Activated CD8-positive, alpha-beta memory T cell treated with anti-CD3 and anti-CD28 coated beads, Interleukin-2, amount 10 ng/mL, durations not matched to agents 7 days and 5 days (primary cell): ENCODE measurements at regions of chr10 and their contacts with region 1.

Region 1: GRCh38 chr10:69232252-69232651 is 12.1 kb downstream of the HKDC1 start:
- DNase-seq: no peak
- ATAC-seq: no peak
- H3K4me3 Mint-ChIP-seq: no peak overlapping the region
- H3K27ac Mint-ChIP-seq: peak overlapping the region; percentile 39
- H3K4me1 Mint-ChIP-seq: peaks cover 65% of the 10 kb centered on the region
- H3K27me3 Mint-ChIP-seq: no peaks in the 10 kb centered on the region

Region 2: GRCh38 chr10:69217119-69217754 is 15.0 kb before region 1 on chr10:
- CTCF ChIA-PET with region 1: interaction called, 10 read pairs
- DNase-seq: no peak
- ATAC-seq: no peak
- H3K4me3 Mint-ChIP-seq: no peak overlapping the region
- H3K27ac Mint-ChIP-seq: no peak overlapping the region
- H3K4me1 Mint-ChIP-seq: peaks cover 54% of the 10 kb centered on the region
- H3K27me3 Mint-ChIP-seq: no peaks in the 10 kb centered on the region

Region 3: GRCh38 chr10:69352569-69353264 is 120.5 kb after region 1 on chr10:
- CTCF ChIA-PET with region 1: no interaction called
- DNase-seq: no peak
- ATAC-seq: no peak
- H3K4me3 Mint-ChIP-seq: no peak overlapping the region
- H3K27ac Mint-ChIP-seq: no peak overlapping the region
- H3K4me1 Mint-ChIP-seq: peaks cover 26% of the 10 kb centered on the region
- H3K27me3 Mint-ChIP-seq: no peaks in the 10 kb centered on the region

Region 4: DNA sequence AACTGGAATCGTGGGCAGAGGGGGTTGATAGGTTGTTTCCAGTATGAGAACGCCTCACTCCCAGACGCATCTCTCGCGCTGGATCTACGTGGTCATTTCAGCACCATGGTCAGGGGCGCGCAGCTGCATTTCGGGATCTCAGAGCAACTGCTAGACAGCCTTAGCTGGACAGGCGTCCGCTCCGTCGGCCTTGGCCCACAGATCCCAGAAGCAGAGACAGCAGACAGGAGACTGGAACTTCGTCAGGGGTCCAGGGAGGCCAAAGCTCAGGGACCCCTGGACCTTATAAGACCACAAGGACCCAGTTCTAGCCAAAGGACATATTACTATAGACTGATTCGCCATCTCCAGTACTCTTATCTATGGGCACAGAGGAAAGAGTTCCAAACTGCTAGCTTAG is 335.7 kb after region 1 on chr10:
- CTCF ChIA-PET with region 1: no interaction called
- DNase-seq: peak; percentile 65
- ATAC-seq: peak; percentile 39
- H3K4me3 Mint-ChIP-seq: no peak overlapping the region
- H3K27ac Mint-ChIP-seq: no peak overlapping the region
- H3K4me1 Mint-ChIP-seq: peaks cover 6% of the 10 kb centered on the region
- H3K27me3 Mint-ChIP-seq: peaks cover 87% of the 10 kb centered on the region